Head of caudate nucleus (tissue), 42 donors: ENCODE measurements at regions of chr19 and their contacts with region 1.

Region 1: GRCh38 chr19:40217934-40218890 is at the start of gene TTC9B:
- DNase-seq: peak in 40 of 42 donors; percentile 29 to 87 (median 69)

Region 2: DNA sequence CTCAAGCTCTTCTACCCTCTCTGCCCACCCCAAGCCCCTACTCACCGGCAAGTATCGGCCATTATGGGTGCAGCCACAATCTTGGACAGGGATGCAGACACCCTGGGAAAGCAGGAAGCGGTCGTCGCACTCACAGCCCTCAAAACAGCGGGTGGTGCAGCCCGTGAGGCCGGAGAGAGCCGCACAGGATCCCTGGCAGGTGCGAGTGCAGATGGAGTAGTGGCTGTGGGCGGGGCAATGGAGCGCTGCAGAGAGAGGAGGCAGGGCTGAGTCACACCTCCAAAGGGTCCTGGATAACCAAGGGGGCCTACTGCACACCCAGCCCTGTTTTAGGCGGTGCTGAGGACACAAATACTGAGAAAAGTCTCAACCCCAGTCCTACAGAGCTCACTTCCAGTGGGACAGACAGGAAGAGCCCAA is 348.0 kb before region 1 on chr19:
- intact Hi-C with region 1: no loop called
- DNase-seq: no peak

Region 3: GRCh38 chr19:40139533-40140287 is 78.5 kb before region 1 on chr19:
- intact Hi-C with region 1: loop called (anchors 2 kb)
- DNase-seq: peak in 11 of 42 donors; percentile 10 to 69 (median 28)

Region 4: GRCh38 chr19:40257057-40257517 is 38.9 kb after region 1 on chr19:
- intact Hi-C with region 1: no loop called
- DNase-seq: no peak